WTC11 (cell line): ENCODE measurements at regions of chr20 and their contacts with region 1.

Region 1: DNA sequence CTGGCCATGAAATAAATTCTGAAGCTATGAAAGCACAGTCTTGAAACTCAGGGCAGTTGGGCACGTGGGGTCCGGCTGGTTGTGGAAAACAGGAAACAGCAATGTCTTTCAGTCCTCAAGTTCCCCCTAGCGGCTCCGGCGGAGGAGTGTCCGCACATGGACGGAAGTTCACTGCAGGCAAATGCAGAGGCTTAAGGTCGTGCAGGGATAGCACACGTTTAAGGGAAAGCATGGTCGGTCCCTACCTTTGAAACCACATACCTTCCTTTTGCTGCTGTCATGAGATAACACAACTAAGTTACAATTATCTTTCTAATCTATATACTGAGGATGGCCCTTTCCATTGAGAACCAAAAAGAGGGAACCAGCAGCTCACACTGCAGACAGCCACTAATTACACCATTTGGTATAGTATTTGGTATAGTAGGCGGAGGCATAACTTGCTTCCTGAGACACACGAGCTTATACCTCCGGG is 52.6 kb upstream of the NFATC2 start:
- DNase-seq: peak; percentile 84
- ATAC-seq: peak; percentile 96
- H3K4me3 Mint-ChIP-seq: no peak overlapping the region
- H3K27ac Mint-ChIP-seq: no peak overlapping the region
- H3K4me1 Mint-ChIP-seq: peaks cover 44% of the 10 kb centered on the region
- H3K27me3 Mint-ChIP-seq: no peaks in the 10 kb centered on the region; the same call in 1 of the 2 replicates
- CTCF ChIP-seq: peak; percentile 61

Region 2: DNA sequence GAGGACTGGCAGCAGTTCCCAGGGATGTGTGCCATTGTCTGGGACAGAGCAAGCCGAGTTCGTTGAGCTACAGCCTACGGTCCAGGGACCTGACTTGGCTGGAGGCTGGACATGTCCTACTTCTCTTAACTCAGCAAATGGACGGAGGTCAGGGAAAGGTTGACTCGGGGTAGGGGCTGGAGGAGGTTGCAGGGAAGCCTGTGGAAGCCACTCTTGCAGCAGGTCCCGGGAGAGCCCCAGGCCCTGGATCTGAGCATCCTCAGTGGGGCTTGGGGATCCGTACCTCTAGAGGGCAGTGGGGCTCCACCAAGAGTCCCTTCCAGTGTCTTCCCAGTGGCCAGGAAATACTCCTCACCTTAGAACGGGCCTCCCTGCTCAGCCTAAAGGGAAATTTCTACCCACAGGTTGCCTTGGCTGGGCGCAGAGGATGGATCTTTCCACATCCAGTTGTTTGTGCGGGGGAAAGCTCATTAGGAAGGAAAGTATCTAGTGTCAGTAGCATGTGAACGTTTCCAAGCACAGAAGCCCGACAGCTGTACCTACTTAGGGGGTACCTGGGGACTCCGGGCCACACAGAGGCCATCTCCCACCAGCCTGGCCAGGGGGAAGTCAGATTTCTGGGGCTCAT is 222.8 kb before region 1 on chr20:
- CTCF ChIA-PET with region 1: interaction called, 10 read pairs
- POLR2A ChIA-PET with region 1: interaction called, 6 read pairs
- DNase-seq: peak; percentile 84
- ATAC-seq: peak; percentile 99
- H3K4me3 Mint-ChIP-seq: no peak overlapping the region
- H3K27ac Mint-ChIP-seq: 0 out of 2 replicates have a peak overlapping the region, but pooled peaks have one; percentile 36
- H3K4me1 Mint-ChIP-seq: peaks cover 10% of the 10 kb centered on the region
- H3K27me3 Mint-ChIP-seq: no peaks in the 10 kb centered on the region
- CTCF ChIP-seq: peak; percentile 44

Region 3: GRCh38 chr20:51378171-51378929 is 216.7 kb before region 1 on chr20:
- CTCF ChIA-PET with region 1: interaction called, 23 read pairs
- POLR2A ChIA-PET with region 1: no interaction called
- DNase-seq: peak; percentile 61
- ATAC-seq: peak; percentile 85
- H3K4me3 Mint-ChIP-seq: no peak overlapping the region
- H3K27ac Mint-ChIP-seq: no peak overlapping the region; the same call in 1 of the 2 replicates
- H3K4me1 Mint-ChIP-seq: peaks cover 8% of the 10 kb centered on the region
- H3K27me3 Mint-ChIP-seq: no peaks in the 10 kb centered on the region
- CTCF ChIP-seq: no peak

Region 4: GRCh38 chr20:51423290-51423667 is 171.8 kb before region 1 on chr20:
- CTCF ChIA-PET with region 1: interaction called, 10 read pairs
- POLR2A ChIA-PET with region 1: no interaction called
- DNase-seq: no peak
- ATAC-seq: no peak
- H3K4me3 Mint-ChIP-seq: no peak overlapping the region
- H3K27ac Mint-ChIP-seq: peak overlapping the region; percentile 82
- H3K4me1 Mint-ChIP-seq: peaks cover 42% of the 10 kb centered on the region
- H3K27me3 Mint-ChIP-seq: no peaks in the 10 kb centered on the region
- CTCF ChIP-seq: no peak

Region 5: GRCh38 chr20:51541189-51542032 is 53.7 kb before region 1 on chr20:
- CTCF ChIA-PET with region 1: interaction called, 10 read pairs
- POLR2A ChIA-PET with region 1: no interaction called
- DNase-seq: peak; percentile 25
- ATAC-seq: peak; percentile 7; the same call in 1 of the 2 replicates
- H3K4me3 Mint-ChIP-seq: peak overlapping the region; percentile 58
- H3K27ac Mint-ChIP-seq: no peak overlapping the region
- H3K4me1 Mint-ChIP-seq: peaks cover 16% of the 10 kb centered on the region
- H3K27me3 Mint-ChIP-seq: peaks cover 37% of the 10 kb centered on the region
- CTCF ChIP-seq: no peak

Region 6: GRCh38 chr20:51562332-51563155 is 32.6 kb before region 1 on chr20:
- CTCF ChIA-PET with region 1: interaction called, 13 read pairs
- POLR2A ChIA-PET with region 1: no interaction called
- DNase-seq: peak; percentile 63
- ATAC-seq: peak; percentile 73
- H3K4me3 Mint-ChIP-seq: peak overlapping the region; percentile 77
- H3K27ac Mint-ChIP-seq: no peak overlapping the region
- H3K4me1 Mint-ChIP-seq: peaks cover 25% of the 10 kb centered on the region
- H3K27me3 Mint-ChIP-seq: peaks cover 60% of the 10 kb centered on the region
- CTCF ChIP-seq: no peak

Region 7: GRCh38 chr20:51624157-51624731 is 29.1 kb after region 1 on chr20:
- CTCF ChIA-PET with region 1: interaction called, 40 read pairs
- POLR2A ChIA-PET with region 1: no interaction called
- DNase-seq: peak; percentile 84
- ATAC-seq: peak; percentile 92
- H3K4me3 Mint-ChIP-seq: no peak overlapping the region
- H3K27ac Mint-ChIP-seq: peak overlapping the region; percentile 84; the same call in 1 of the 2 replicates
- H3K4me1 Mint-ChIP-seq: peaks cover 9% of the 10 kb centered on the region
- H3K27me3 Mint-ChIP-seq: no peaks in the 10 kb centered on the region
- CTCF ChIP-seq: peak; percentile 76

Region 8: GRCh38 chr20:52033301-52033700 is 438.2 kb after region 1 on chr20:
- CTCF ChIA-PET with region 1: no interaction called
- POLR2A ChIA-PET with region 1: no interaction called
- DNase-seq: no peak
- ATAC-seq: peak; percentile 77
- H3K4me3 Mint-ChIP-seq: no peak overlapping the region
- H3K27ac Mint-ChIP-seq: peak overlapping the region; percentile 40
- H3K4me1 Mint-ChIP-seq: peaks cover 19% of the 10 kb centered on the region
- H3K27me3 Mint-ChIP-seq: no peaks in the 10 kb centered on the region
- CTCF ChIP-seq: no peak